ENCODE measurements at regions of chr6 and their contacts with region 1.

Region 1: GRCh38 chr6:31739639-31740396 is at the start of gene MSH5:
- DNase-seq: peak; percentile 96
- ATAC-seq: peak; percentile 82
- H3K4me3 Mint-ChIP-seq: peak within 1 kb of the TSS; percentile 98
- H3K27ac Mint-ChIP-seq: peak within 1 kb of the TSS; percentile 93
- H3K4me1 Mint-ChIP-seq: peaks cover 50% of the 10 kb centered on the region
- H3K27me3 Mint-ChIP-seq: no peaks in the 10 kb centered on the region
- total RNA-seq, gene MSH5: 59.2 to 68.2 TPM

Region 2: DNA sequence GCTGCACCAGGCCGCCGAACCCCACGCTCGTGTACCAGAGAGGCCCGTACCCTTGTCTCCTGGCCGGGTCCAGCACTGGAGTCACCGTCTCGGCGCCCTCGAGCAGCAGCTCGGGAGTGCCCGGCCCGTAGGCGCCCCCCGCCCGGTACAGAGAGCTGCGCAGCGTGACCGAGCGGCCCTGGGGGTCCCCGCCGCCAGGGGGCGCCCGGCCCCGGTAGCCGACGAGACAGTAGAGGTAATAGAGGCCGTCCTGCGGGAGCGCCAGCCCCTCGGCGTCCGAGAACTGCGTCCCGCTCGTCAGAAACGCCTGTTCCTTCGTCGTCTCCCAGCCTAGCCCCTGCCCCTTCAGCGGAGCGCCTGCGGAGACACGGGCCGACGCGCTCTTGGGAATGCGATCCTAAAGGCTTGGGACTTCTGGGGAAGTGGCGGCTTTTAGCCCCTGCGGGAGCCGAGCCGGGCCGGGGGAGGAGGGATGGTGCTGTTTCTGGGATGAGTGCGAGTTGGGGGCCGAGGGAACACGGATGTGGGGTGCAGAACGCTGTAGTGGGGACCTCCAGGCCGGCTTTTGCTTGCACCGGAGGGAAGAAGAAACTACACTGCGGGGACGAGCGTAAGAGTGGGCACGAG is 158.9 kb before region 1 on chr6:
- POLR2A ChIA-PET with region 1: interaction called, 12 read pairs
- DNase-seq: peak; percentile 97
- ATAC-seq: peak; percentile 74
- H3K4me3 Mint-ChIP-seq: peak overlapping the region; percentile 97
- H3K27ac Mint-ChIP-seq: peak overlapping the region; percentile 99
- H3K4me1 Mint-ChIP-seq: peaks cover 67% of the 10 kb centered on the region
- H3K27me3 Mint-ChIP-seq: no peaks in the 10 kb centered on the region

Region 3: DNA sequence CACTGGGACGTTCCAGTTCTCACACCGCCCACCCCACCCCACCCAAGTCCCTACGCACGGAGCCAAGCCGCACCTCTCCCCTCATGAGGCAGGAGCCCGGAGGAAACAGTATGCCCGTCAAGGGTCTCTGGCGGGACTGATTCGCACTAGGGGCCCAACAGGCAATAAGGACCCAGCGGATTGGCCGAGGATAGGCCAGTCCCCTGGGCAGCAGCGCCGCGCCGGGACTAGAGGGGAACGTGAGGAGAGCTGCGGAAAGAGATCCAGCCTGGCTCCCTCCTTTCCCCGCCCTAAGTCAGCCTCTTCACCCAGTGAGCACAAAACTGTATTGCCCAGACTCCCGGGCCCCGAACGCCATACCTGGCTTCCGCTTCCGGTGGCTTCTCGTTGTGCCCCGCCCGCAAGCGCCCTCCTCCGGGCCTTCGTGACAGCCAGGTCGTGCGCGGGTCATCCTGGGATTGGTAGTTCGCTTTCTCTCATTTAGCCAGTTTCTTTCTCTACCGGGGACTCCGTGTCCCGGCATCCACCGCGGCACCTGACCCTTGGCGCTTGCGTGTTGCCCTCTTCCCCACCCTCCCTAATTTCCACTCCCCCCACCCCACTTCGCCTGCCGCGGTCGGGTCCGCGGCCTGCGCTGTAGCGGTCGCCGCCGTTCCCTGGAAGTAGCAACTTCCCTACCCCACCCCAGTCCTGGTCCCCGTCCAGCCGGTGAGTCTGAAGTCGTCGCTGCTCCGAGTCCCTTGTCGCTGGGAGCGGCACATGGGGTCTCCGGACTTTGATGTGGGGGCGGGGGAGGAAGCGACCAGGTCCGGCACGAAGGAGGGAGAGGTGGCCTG is 74.1 kb before region 1 on chr6 and contains the start of gene CSNK2B:
- POLR2A ChIA-PET with region 1: interaction called, 25 read pairs
- DNase-seq: peak; percentile 95
- ATAC-seq: peak; percentile 86
- H3K4me3 Mint-ChIP-seq: peak within 1 kb of the TSS; percentile 96
- H3K27ac Mint-ChIP-seq: peak within 1 kb of the TSS; percentile 98
- H3K4me1 Mint-ChIP-seq: peaks cover 42% of the 10 kb centered on the region
- H3K27me3 Mint-ChIP-seq: no peaks in the 10 kb centered on the region
- total RNA-seq, gene CSNK2B: 206 to 216 TPM

Region 4: DNA sequence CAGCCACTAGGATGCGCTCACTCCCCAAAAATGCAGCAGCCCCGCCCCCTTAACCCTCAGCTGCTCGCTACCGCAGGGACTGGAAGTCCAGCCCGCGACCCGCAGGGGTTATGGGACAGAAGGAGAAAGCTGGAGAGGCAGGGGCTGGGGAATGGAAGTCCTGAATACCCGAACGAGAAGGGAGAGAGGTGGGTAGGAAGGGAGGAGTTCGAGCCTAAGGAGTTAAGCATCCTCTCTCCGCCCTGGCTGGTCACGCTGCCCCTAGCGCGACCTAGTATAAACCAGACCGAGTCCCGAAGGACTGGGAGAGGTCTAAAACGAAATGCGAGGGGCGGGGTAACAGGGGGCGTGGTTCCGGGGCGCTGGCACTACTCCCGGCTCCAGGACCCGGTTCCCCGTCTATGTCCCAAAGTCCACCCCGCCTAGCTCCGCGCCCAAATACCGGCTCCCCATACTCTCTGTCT is 10.3 kb before region 1 on chr6:
- POLR2A ChIA-PET with region 1: interaction called, 137 read pairs
- DNase-seq: peak; percentile 84
- ATAC-seq: peak; percentile 57
- H3K4me3 Mint-ChIP-seq: peak overlapping the region; percentile 98
- H3K27ac Mint-ChIP-seq: peak overlapping the region; percentile 88
- H3K4me1 Mint-ChIP-seq: peaks cover 59% of the 10 kb centered on the region
- H3K27me3 Mint-ChIP-seq: no peaks in the 10 kb centered on the region

Region 5: DNA sequence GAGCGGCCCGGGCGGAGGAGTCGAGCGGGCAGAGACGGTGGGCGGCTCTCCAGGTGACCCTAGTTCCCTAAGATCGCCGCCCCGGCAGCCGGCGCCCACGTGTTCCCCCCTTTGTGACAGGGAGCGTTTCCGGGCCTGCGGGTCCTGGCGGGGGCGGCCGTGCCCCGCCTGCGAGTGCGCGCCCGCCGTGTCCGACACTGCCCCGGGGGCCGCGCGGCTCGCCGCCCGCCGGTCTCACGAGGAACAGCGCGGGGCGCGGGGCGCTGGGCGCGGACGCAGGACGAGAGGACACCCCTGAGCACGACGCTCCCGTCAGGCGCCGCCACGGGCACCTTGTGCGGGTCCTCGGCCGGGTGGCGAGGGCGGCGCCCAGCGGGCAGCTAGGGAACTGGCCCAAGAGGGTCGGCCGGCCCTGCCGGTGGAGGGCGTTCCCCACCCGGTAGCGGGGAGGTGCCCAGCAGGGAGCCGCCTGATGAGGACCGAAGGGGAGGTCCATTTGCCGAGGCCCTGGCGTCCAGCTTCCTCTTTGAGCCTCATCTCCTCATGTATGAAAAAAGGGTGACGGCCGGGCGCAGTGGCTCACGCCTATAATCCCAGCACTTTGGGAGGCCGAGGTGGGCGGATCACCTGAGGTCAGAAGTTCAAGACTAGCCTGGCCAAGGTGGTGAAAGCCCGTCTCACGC is 55.9 kb after region 1 on chr6 and contains the start of gene VARS1:
- POLR2A ChIA-PET with region 1: interaction called, 26 read pairs
- DNase-seq: peak; percentile 92
- ATAC-seq: peak; percentile 82
- H3K4me3 Mint-ChIP-seq: peak within 1 kb of the TSS; percentile 98
- H3K27ac Mint-ChIP-seq: peak within 1 kb of the TSS; percentile 97
- H3K4me1 Mint-ChIP-seq: peaks cover 35% of the 10 kb centered on the region
- H3K27me3 Mint-ChIP-seq: no peaks in the 10 kb centered on the region
- total RNA-seq, gene VARS1: 68.2 to 75.3 TPM

Region 6: GRCh38 chr6:31822036-31822821 is 82.4 kb after region 1 on chr6:
- POLR2A ChIA-PET with region 1: interaction called, 29 read pairs
- DNase-seq: peak; percentile 65
- ATAC-seq: peak; percentile 23
- H3K4me3 Mint-ChIP-seq: peak overlapping the region; percentile 99
- H3K27ac Mint-ChIP-seq: peak overlapping the region; percentile 96
- H3K4me1 Mint-ChIP-seq: peaks cover 41% of the 10 kb centered on the region
- H3K27me3 Mint-ChIP-seq: no peaks in the 10 kb centered on the region

Region 7: DNA sequence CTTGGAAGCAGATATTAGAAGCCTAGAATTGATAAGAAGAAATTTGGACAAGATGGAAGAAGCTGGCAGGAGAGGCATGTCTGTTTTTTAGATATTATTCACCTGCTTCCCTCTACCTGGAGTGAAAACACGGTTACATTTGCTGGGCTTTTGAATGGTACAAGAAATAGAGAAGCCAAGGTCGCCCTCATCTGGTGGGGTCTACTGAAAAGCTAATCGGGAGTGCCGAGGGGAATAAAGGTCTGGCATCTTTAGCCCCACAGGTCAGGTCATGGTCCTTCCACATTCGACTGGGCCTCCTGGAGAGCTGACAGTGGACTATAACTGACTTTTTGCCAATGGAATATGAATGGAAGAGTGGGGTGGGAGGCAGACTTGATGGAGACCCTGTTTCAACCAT is 183.1 kb after region 1 on chr6:
- POLR2A ChIA-PET with region 1: no interaction called
- DNase-seq: no peak
- ATAC-seq: peak; percentile 34
- H3K4me3 Mint-ChIP-seq: no peak overlapping the region
- H3K27ac Mint-ChIP-seq: no peak overlapping the region
- H3K4me1 Mint-ChIP-seq: no peaks in the 10 kb centered on the region
- H3K27me3 Mint-ChIP-seq: peaks cover 8% of the 10 kb centered on the region